Ovary (tissue), 10 donors: ENCODE measurements at regions of chr1 and their contacts with region 1.

Region 1: GRCh38 chr1:236370420-236370819 is 23.7 kb upstream of the EDARADD start:
- DNase-seq: no peak
- H3K4me3 ChIP-seq: no peak overlapping the region
- H3K27ac ChIP-seq: no peak overlapping the region
- H3K4me1 ChIP-seq: no peaks in the 10 kb centered on the region
- H3K27me3 ChIP-seq: no peaks in the 10 kb centered on the region
- CTCF ChIP-seq: no peak
- EP300 ChIP-seq: no peak
- POLR2A ChIP-seq: no peak

Region 2: GRCh38 chr1:235648954-235649367 is 721.5 kb before region 1 on chr1:
- intact Hi-C with region 1: no loop called
- DNase-seq: peak; percentile 59 to 77 (median 67)
- H3K4me3 ChIP-seq: peak overlapping the region; percentile 41
- H3K27ac ChIP-seq: peak overlapping the region; percentile 90 to 92
- H3K4me1 ChIP-seq: peaks cover 3% of the 10 kb centered on the region
- H3K27me3 ChIP-seq: no peaks in the 10 kb centered on the region
- CTCF ChIP-seq: no peak
- EP300 ChIP-seq: no peak
- POLR2A ChIP-seq: peak; percentile 20

Region 3: GRCh38 chr1:236354330-236355147 is 15.9 kb before region 1 on chr1:
- intact Hi-C with region 1: loop called in 1 of 4 experiments (anchors 1 kb)
- DNase-seq: no peak
- H3K4me3 ChIP-seq: no peak overlapping the region
- H3K27ac ChIP-seq: no peak overlapping the region
- H3K4me1 ChIP-seq: no peaks in the 10 kb centered on the region
- H3K27me3 ChIP-seq: no peaks in the 10 kb centered on the region
- CTCF ChIP-seq: no peak
- EP300 ChIP-seq: no peak
- POLR2A ChIP-seq: no peak

Region 4: GRCh38 chr1:236507022-236507700 is 136.7 kb after region 1 on chr1:
- intact Hi-C with region 1: no loop called
- DNase-seq: no peak
- H3K4me3 ChIP-seq: no peak overlapping the region
- H3K27ac ChIP-seq: no peak overlapping the region
- H3K4me1 ChIP-seq: peaks cover 2% of the 10 kb centered on the region
- H3K27me3 ChIP-seq: no peaks in the 10 kb centered on the region
- CTCF ChIP-seq: no peak
- EP300 ChIP-seq: no peak
- POLR2A ChIP-seq: no peak